BJ (cell line): ENCODE measurements at regions of chr1 and their contacts with region 1.

Region 1: DNA sequence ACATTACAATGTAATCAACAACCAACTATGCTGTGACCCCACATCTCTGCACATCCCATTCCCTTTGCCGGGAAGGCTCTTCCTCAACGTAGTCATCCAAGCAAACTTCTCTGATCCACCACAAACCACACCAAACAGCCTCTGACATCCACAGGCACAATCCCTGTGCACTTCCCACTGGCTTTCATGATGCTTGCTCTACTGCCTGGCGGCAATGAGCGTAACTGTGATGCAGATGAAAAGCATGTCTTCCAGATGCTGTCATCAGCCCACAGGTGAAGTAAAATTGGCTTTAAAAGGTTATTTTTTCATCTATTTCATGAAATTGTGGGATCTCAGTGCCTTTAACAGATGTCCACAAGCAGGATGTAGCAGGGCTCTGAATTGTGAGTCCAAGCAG is 635.2 kb downstream of the SMYD3 start:
- DNase-seq: peak; percentile 98
- H3K4me3 ChIP-seq: no peak overlapping the region
- H3K27me3 ChIP-seq: no peaks in the 10 kb centered on the region
- CTCF ChIP-seq: no peak

Region 2: DNA sequence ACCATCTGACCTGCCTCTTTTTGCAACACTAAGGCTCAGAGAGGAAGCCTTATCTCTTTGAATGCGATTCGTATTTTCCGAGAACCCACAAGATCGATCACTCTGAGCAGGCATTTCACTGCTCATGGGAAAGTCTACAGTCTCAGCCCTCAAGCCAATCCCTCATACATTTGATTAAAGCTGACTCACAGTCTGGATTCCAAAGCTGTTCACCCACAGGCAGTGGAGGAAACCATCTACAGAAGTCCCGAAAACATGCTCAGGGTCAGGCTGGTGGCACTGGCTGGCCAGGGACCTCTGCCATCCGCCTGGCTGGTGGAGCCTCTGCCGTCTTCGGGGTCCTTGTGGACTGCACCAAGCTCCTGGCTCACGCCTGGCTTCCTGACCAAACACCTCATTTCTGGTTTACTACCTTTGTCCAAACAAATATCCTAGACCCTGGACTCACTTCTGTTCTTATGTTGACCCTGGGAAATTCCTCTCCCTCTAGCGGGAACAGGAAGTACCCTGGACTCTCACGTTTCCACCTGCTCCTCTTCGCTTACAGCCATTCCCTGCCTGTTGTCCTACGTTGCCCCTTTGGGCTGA is 14.9 kb before region 1 on chr1:
- CTCF ChIA-PET with region 1: interaction called, 4 read pairs
- POLR2A ChIA-PET with region 1: interaction called, 11 read pairs
- DNase-seq: no peak
- H3K4me3 ChIP-seq: no peak overlapping the region
- H3K27me3 ChIP-seq: no peaks in the 10 kb centered on the region
- CTCF ChIP-seq: no peak